Prostate gland (tissue), 2 donors: ENCODE measurements at regions of chr9 and their contacts with region 1.

Region 1: GRCh38 chr9:106130374-106130773 is 436.0 kb downstream of the TMEM38B start:
- DNase-seq: no peak
- H3K4me3 ChIP-seq: no peak overlapping the region
- H3K27ac ChIP-seq: no peak overlapping the region
- H3K4me1 ChIP-seq: no peaks in the 10 kb centered on the region
- H3K27me3 ChIP-seq: no peaks in the 10 kb centered on the region
- CTCF ChIP-seq: no peak
- POLR2A ChIP-seq: no peak

Region 2: GRCh38 chr9:105901514-105902109 is 228.8 kb before region 1 on chr9:
- intact Hi-C with region 1: loop called (anchors 10 kb)
- DNase-seq: peak; percentile 41
- H3K4me3 ChIP-seq: no peak overlapping the region
- H3K27ac ChIP-seq: no peak overlapping the region
- H3K4me1 ChIP-seq: no peaks in the 10 kb centered on the region
- H3K27me3 ChIP-seq: no peaks in the 10 kb centered on the region
- CTCF ChIP-seq: peak; percentile 46 to 75 (median 71)
- POLR2A ChIP-seq: no peak